ENCODE measurements at regions of chr3 and their contacts with region 1.

Region 1: GRCh38 chr3:14274999-14275961 is 96.7 kb downstream of the LSM3 start:
- DNase-seq: no peak
- ATAC-seq: no peak

Region 2: DNA sequence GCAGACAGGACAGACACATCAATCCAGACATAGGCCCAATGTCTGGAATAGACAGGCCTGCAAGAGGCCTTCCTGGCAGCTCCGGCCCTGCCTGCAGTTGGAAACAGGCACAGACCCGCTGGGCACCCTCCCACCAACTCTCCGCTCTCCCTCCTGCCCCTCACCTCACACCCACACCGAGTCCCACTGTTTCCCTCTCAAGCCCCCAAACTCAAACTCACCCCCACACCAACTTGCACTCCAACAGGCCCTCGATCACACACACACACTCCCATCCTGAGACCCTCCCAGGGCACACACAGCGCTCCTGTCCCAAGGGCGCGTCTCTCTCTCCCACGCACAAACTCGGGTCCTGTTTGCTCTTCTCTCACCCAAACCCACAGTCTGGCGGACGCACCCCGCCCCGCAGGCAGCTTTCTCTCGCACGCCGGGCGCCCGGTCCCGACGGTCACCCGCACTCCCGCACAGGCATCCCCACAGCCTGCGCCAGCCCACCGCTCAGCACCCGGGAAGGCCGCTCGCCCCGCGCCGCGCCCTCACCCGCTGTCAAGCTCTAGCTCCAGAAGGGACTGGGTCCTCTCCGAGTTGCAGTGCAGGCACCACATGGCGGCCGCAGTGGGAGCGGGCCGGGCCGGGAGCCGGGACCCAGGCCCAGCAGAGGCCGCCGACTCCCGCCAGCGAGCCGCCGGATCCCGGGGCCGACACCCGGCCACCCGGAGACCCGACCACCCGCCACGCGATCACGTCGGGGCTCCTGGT is 1308.3 kb before region 1 on chr3:
- intact Hi-C with region 1: no loop called
- DNase-seq: peak; percentile 74
- ATAC-seq: peak; percentile 5

Region 3: GRCh38 chr3:13391308-13391707 is 884.0 kb before region 1 on chr3:
- intact Hi-C with region 1: no loop called
- DNase-seq: no peak
- ATAC-seq: no peak

Region 4: DNA sequence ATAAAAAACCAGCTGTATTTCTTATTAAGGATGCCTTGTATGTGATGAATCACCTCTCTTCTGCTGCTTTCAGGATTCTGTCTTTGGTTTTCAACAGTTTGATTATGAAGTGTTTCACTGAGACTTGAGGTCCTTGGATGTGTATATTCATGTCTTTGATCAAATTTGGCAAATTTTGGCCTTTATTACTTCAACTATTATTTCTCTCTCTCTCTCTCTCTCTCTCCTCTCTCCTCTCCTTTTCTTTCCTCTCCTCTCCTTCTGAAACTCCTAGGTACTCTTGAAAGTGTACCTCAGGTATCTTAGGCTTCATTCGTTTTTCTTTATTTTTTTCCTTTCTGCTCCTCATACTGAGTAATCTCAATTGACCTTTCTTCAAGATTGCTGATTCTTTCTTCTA is 53.4 kb before region 1 on chr3:
- intact Hi-C with region 1: no loop called
- DNase-seq: no peak
- ATAC-seq: no peak

Region 5: GRCh38 chr3:14231998-14232501 is 43.2 kb before region 1 on chr3:
- intact Hi-C with region 1: loop called (anchors 1 kb)
- DNase-seq: no peak
- ATAC-seq: no peak

Region 6: GRCh38 chr3:14761118-14761672 is 485.9 kb after region 1 on chr3:
- intact Hi-C with region 1: no loop called
- DNase-seq: no peak
- ATAC-seq: no peak